Transverse colon (tissue), 4 donors: ENCODE measurements at regions of chr4 and their contacts with region 1.

Region 1: GRCh38 chr4:58093352-58093751 is 983.2 kb upstream of the IGFBP7 start:
- DNase-seq: no peak
- H3K4me3 ChIP-seq: no peak overlapping the region
- H3K27ac ChIP-seq: no peak overlapping the region
- H3K4me1 ChIP-seq: peaks cover 0 to 3% (median 0%) of the 10 kb centered on the region in 4 donors
- H3K27me3 ChIP-seq: no peaks in the 10 kb centered on the region
- CTCF ChIP-seq: no peak
- EP300 ChIP-seq: no peak
- POLR2A ChIP-seq: no peak

Region 2: DNA sequence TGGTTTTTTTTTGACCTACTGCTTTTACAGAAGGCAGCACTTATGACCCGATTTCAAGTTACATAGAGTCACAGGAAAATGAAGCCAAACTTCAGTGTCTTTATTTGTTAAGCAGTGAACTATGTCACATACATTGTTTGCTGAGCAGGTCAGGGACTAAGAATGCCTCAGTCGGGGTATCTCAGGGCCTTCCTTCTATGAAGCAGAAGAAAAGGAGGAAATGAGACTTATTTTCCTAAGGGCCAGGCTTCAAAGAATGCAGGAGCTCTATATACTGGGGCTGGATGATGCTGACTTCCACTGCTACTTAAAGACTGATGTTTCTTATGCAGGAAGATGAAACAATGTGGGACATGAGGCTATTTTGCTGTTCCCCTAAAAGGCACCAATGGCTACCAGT is 424.7 kb before region 1 on chr4:
- in situ Hi-C with region 1: no loop called
- intact Hi-C with region 1: no loop called
- DNase-seq: no peak
- H3K4me3 ChIP-seq: no peak overlapping the region
- H3K27ac ChIP-seq: no peak overlapping the region
- H3K4me1 ChIP-seq: no peaks in the 10 kb centered on the region
- H3K27me3 ChIP-seq: no peaks in the 10 kb centered on the region
- CTCF ChIP-seq: no peak
- EP300 ChIP-seq: no peak
- POLR2A ChIP-seq: no peak

Region 3: DNA sequence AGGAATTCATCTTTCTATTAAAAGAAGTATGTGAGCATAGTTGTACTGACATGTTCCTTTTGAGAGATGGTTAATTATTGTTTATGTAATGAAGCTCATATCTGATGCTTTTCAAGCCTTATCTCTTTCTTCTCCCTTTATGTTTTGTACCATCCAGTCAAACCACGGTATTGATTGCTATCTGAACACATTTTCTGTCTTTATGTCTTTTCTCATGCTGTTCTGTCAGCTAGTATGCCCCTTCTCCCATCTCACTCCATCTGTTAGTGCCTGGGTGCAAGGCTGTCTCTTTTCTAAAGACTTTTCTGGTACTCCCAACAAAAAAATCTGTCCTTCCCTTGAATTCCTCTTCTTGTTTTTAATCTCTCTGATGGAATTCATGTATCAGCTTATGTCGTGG is 99.4 kb before region 1 on chr4:
- in situ Hi-C with region 1: no loop called
- intact Hi-C with region 1: no loop called
- DNase-seq: no peak
- H3K4me3 ChIP-seq: no peak overlapping the region
- H3K27ac ChIP-seq: no peak overlapping the region
- H3K4me1 ChIP-seq: no peaks in the 10 kb centered on the region
- H3K27me3 ChIP-seq: no peaks in the 10 kb centered on the region
- CTCF ChIP-seq: no peak
- EP300 ChIP-seq: no peak
- POLR2A ChIP-seq: no peak

Region 4: GRCh38 chr4:59983852-59984251 is 1890.5 kb after region 1 on chr4:
- in situ Hi-C with region 1: no loop called
- intact Hi-C with region 1: loop called (anchors 5 kb)
- DNase-seq: no peak
- H3K4me3 ChIP-seq: no peak overlapping the region
- H3K27ac ChIP-seq: no peak overlapping the region
- H3K4me1 ChIP-seq: no peaks in the 10 kb centered on the region
- H3K27me3 ChIP-seq: no peaks in the 10 kb centered on the region
- CTCF ChIP-seq: no peak
- EP300 ChIP-seq: no peak
- POLR2A ChIP-seq: no peak